ENCODE measurements at regions of chr15 and their contacts with region 1.

Region 1: DNA sequence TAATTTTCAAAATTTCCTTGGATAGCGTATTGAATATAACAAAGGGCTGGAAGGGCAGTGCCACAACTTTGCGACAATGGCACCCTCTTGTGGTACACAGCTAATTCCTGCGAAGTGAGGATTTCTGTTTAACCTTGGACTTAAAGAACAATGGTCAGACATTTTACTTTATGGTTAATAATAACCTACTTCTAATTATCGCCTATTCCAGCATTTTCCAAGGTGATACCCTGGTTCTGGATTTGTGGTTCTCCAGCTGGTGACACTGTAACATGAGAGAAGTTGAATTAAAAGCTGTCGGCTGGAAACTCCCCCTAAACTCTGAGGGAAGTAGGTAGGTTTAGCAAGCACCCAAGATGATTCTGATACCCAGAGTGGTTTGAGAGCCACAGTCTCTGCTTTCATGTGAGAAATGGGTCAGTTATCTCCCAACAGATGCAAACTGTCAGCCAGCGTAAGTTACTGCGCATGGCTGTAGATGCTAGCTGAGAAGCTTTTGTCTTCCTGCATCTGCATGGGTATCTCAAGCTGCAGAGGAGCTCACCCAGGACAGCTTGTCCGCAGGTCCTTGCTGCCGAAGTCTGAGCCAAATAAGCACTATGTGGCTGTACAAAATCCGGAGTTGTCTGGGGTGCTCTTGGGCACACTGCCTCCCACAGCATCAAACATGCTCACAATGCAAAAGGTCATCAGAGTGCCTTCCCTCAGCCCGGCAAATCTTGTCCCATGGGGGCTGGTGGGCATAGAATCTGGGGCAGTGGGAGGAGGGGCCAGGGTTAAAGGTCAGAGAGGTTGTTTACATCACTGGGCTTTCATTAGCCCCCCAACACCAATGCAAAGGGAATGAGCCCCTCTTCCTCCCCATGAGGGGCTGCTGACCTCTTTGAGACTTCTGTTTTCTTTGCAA is 6.6 kb upstream of the CHSY1 start:
- DNase-seq: peak; percentile 45
- ATAC-seq: peak; percentile 62
- H3K4me3 Mint-ChIP-seq: no peak overlapping the region
- H3K27ac Mint-ChIP-seq: no peak overlapping the region
- H3K4me1 Mint-ChIP-seq: peaks cover 38% of the 10 kb centered on the region
- H3K27me3 Mint-ChIP-seq: no peaks in the 10 kb centered on the region
- CTCF ChIP-seq: peak; percentile 48

Region 2: DNA sequence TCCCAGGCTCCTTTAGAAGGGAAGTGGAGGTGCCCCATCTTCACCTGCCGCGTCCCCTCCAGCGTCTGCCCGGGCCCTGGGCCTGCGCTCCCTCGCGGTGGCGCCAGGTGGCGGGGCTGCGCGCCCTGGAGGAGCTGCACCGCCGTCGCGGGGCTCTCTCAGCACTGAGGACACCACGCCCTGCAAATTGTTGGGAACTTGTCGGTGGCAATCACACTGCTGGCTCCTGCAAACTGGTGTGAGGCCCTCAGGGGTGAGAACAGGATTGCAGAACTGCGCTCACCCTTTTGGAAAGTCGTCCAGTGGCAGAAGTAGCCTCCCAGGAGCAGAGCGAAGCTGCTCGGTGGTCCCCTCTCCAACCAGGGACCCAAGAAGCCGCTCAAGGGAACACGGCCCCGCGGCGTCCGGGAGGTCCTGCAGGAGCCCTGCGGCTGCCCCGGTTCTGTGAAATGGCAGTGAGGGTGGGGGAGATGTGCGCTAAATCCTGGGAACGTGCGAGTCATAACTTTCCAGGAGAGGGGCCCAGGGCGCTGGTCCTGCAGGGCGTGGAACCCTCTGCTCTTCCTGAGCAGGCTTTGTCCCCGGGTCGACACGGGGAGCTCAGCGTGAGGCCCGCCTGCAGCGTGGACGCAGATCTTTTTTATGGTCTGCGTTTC is 340.3 kb before region 1 on chr15:
- CTCF ChIA-PET with region 1: interaction called, 12 read pairs
- POLR2A ChIA-PET with region 1: no interaction called
- DNase-seq: peak; percentile 88
- ATAC-seq: peak; percentile 88
- H3K4me3 Mint-ChIP-seq: peak overlapping the region; percentile 66
- H3K27ac Mint-ChIP-seq: no peak overlapping the region
- H3K4me1 Mint-ChIP-seq: peaks cover 18% of the 10 kb centered on the region
- H3K27me3 Mint-ChIP-seq: peaks cover 58% of the 10 kb centered on the region
- CTCF ChIP-seq: peak; percentile 85

Region 3: DNA sequence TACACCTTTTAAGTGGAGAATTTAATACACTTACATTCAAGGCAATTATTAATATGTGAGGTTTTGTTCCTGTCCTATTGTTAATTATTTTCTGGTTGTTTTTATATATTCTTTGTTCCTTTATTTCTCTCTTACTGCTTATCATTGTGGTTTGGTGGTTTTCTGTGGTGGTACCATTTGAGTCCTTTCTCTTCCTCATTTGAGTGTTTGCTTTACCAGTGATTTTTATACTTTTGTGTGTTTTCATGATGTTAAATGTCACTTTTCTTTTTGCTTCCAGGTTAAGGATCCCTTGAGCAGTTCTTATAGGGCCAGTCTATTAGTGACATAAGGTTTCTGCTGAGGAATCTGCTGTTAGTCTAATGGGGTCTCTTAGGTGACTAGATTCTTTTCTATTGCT is 222.9 kb before region 1 on chr15:
- CTCF ChIA-PET with region 1: no interaction called
- POLR2A ChIA-PET with region 1: no interaction called
- DNase-seq: no peak
- ATAC-seq: no peak
- H3K4me3 Mint-ChIP-seq: no peak overlapping the region
- H3K27ac Mint-ChIP-seq: no peak overlapping the region
- H3K4me1 Mint-ChIP-seq: 0 out of 2 replicates have a peak, but pooled peaks cover 2% of the 10 kb centered on the region
- H3K27me3 Mint-ChIP-seq: no peaks in the 10 kb centered on the region; the same call in 1 of the 2 replicates
- CTCF ChIP-seq: no peak

Region 4: DNA sequence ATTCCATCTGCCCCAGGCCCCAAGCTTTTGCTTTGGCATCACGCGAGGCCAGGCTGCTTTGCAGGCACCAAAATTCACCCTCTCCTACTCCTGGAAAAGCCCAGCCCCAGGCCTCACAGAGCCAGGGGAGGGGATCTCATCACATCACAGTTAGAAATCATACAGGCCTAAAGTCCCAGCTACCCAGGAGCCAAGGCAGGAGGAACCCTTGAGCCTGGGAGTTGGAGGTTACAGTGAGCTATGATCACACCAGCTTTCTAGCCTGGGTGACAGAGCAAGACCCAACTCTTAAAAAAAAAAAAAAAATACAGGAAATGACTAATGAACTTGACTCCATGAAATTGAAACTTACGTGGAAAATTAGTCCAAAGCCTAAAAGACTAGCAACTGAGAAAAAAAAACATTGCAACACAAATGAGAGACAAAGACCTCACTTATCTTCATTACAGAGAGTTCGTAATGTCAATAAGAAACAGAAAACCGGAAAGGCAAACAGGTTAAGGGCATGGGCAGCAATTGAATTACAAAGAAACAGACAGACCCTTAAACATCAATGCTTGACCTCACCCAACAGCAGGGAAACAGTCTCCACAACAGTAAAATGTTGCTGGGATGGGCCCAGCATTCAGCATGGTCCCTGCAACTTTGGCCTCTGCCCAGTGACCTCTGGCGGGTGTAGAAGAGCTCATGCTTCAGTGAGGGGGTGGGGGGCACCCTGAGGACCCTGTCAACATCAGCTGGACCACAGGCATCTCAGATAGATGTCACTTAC is 187.8 kb before region 1 on chr15:
- CTCF ChIA-PET with region 1: interaction called, 11 read pairs
- POLR2A ChIA-PET with region 1: no interaction called
- DNase-seq: no peak
- ATAC-seq: peak; percentile 6; the same call in 1 of the 2 replicates
- H3K4me3 Mint-ChIP-seq: peak overlapping the region; percentile 14; the same call in 1 of the 2 replicates
- H3K27ac Mint-ChIP-seq: peak overlapping the region; percentile 98
- H3K4me1 Mint-ChIP-seq: peaks cover 62% of the 10 kb centered on the region
- H3K27me3 Mint-ChIP-seq: peaks cover 17% of the 10 kb centered on the region
- CTCF ChIP-seq: no peak

Region 5: DNA sequence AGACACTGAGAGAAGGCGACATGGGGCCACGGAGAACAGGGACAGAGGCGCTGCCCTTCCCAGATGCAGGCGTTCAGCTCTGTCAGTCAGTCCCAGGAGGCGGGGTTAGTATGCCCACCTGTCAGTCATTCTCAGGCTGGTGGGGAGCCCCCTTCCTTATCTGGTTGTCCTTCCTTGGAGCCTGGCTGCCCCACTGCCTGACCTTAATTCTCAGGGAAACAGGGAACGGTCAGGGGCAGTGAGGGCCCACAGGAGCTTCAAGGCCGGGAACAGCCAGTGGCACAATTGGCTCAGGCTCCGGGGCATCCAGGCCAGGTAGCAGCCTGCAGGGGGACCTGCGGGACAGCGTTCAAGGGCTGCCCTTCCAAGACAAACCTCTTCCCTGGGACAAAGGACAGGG is 139.9 kb before region 1 on chr15:
- CTCF ChIA-PET with region 1: interaction called, 16 read pairs
- POLR2A ChIA-PET with region 1: no interaction called
- DNase-seq: peak; percentile 39
- ATAC-seq: peak; percentile 56
- H3K4me3 Mint-ChIP-seq: no peak overlapping the region
- H3K27ac Mint-ChIP-seq: no peak overlapping the region
- H3K4me1 Mint-ChIP-seq: peaks cover 30% of the 10 kb centered on the region
- H3K27me3 Mint-ChIP-seq: no peaks in the 10 kb centered on the region
- CTCF ChIP-seq: no peak

Region 6: DNA sequence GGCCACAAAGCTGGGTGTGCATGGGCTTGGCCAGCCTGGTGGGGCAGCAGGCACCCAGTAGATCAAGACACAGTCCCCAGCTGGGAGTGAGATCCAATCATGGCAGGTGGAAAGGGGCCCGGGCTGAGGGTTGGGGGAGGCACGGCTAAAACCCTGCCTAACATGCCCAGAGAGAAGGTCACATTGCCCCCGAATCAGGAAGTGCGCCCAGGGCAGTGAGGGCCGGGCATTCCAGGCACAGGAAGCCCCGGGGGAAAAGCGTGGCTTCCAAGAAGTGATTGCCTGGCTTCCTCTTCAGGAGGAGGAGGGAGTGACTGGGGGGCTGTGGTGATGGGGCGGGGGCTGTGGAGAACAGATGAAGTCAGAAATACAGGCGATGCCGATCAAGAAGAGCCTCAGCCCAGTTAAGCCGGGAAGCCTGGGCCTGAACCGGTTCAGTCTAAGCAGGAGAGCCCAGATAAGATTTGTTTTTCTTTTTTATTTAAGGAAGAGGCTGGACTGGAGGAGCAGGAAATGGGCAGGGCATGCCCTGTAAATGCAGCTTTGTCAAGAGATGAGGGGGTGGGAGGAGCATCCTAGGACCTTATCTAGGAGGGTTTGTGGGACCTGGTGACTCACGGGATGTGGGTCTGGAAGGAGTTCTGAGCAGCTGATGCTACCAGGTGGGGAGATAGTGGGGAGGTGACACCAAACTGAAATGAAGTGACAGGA is 90.6 kb before region 1 on chr15:
- CTCF ChIA-PET with region 1: no interaction called
- POLR2A ChIA-PET with region 1: no interaction called
- DNase-seq: no peak
- ATAC-seq: peak; percentile 28; the same call in 1 of the 2 replicates
- H3K4me3 Mint-ChIP-seq: no peak overlapping the region
- H3K27ac Mint-ChIP-seq: no peak overlapping the region; the same call in 1 of the 2 replicates
- H3K4me1 Mint-ChIP-seq: peaks cover 18% of the 10 kb centered on the region
- H3K27me3 Mint-ChIP-seq: peaks cover 21% of the 10 kb centered on the region
- CTCF ChIP-seq: no peak

Region 7: GRCh38 chr15:101242160-101242998 is 16.1 kb before region 1 on chr15:
- CTCF ChIA-PET with region 1: interaction called, 13 read pairs
- POLR2A ChIA-PET with region 1: no interaction called
- DNase-seq: no peak
- ATAC-seq: no peak
- H3K4me3 Mint-ChIP-seq: no peak overlapping the region
- H3K27ac Mint-ChIP-seq: peak overlapping the region; percentile 75
- H3K4me1 Mint-ChIP-seq: peaks cover 84% of the 10 kb centered on the region
- H3K27me3 Mint-ChIP-seq: no peaks in the 10 kb centered on the region
- CTCF ChIP-seq: no peak